Posterior cingulate gyrus (tissue), 11 donors: ENCODE measurements at regions of chrX and their contacts with region 1.

Region 1: GRCh38 chrX:119791438-119792231 is at the start of gene RPL39:
- DNase-seq: peak; percentile 67 to 97 (median 78)

Region 2: DNA sequence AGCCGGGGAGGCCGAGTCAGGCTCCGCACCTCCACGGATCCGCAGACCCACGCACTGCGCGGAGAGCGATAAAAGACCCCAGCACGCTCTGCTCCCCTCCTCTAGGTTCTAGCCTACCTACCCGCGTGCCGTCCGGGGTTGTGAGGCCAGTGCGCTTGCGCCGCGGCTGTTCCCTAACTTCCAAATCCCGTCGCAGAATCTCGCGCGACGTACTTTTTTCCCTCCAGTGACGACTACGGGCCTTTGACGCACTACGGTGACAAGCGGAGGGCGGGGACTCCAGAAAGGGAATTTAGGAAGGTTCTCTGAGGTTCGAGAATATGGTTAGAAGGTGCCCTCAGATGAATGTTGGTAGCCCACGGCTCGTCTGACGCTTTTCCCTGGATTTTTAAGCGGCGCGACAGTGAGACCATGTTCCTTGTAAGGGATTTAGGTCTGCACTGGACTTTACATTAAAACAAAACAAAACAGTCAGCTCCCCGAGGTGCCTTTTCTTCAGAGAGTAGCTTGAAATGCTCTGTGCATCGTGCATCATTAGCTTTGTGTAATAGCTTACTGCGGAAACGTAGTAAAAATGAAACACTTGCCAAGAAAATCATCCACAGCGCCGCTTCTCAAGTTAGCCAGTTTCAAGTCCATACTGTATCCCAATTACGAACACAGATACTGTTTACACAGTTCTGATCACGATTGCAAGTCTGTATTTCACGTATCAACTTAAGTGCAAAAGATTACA is 185.2 kb before region 1 on chrX and contains the start of gene NKRF:
- intact Hi-C with region 1: loop called (anchors 5 kb)
- DNase-seq: peak; percentile 74 to 97 (median 85)

Region 3: GRCh38 chrX:119622356-119623232 is 169.0 kb before region 1 on chrX:
- intact Hi-C with region 1: no loop called
- DNase-seq: no peak

Region 4: GRCh38 chrX:119729408-119730201 is 62.0 kb before region 1 on chrX:
- intact Hi-C with region 1: no loop called
- DNase-seq: peak in 5 of 10 donors; percentile 12 to 42 (median 17)

Region 5: DNA sequence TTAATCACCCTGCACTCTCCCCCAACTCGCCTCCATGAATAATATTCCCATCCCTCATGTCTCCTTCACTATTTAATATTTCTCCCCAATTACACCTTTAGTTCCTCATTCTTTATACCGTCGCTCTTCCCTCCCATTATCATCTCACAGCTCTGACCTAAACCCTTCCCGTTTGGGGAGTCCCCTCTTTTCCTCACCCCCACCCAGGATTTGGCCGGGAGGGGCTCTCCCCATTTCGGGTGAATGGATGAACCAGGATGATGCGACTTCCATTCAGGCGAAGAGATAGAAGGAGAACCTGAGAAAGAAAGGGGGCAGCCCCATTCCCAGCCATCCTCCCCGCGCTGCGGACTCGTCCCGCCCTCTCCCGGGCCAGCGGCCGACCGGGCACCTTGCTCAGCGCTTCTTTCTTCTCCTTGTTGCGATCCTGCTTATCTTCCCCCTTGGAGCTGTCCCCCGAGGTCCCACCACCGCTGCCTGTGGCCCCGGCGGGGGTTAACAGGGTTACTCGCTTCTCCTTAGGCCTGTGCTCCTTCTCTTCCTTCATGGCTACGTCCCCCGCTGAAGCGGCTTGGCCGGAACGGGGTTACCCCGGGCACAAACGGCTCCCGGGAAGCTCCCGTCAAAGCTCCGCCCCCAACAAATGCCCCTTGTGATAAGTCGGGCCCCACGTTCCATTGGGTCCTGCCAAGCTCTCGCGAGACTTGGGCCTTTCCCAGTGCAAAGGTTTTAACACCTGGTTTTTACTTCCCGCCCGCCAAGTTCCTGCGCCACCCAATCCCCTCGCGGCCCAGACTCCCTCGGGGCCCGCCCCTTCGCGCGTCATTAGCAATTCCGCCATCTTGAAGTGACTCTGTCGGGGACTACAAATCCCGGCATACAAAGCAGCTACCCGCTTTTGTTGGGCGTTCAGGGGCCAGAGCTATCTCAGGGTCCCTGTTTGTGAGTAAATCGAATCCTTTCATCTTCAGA is 61.0 kb after region 1 on chrX and contains the start of gene UPF3B:
- intact Hi-C with region 1: loop called (anchors 5 kb)
- DNase-seq: peak; percentile 84 to 99 (median 90)

Region 6: GRCh38 chrX:119871599-119872395 is 80.2 kb after region 1 on chrX and contains the starts of genes NDUFA1 and RNF113A:
- intact Hi-C with region 1: loop called (anchors 5 kb)
- DNase-seq: peak; percentile 70 to 97 (median 79)